AG04450 (cell line): ENCODE measurements at regions of chr16 and their contacts with region 1.

Region 1: DNA sequence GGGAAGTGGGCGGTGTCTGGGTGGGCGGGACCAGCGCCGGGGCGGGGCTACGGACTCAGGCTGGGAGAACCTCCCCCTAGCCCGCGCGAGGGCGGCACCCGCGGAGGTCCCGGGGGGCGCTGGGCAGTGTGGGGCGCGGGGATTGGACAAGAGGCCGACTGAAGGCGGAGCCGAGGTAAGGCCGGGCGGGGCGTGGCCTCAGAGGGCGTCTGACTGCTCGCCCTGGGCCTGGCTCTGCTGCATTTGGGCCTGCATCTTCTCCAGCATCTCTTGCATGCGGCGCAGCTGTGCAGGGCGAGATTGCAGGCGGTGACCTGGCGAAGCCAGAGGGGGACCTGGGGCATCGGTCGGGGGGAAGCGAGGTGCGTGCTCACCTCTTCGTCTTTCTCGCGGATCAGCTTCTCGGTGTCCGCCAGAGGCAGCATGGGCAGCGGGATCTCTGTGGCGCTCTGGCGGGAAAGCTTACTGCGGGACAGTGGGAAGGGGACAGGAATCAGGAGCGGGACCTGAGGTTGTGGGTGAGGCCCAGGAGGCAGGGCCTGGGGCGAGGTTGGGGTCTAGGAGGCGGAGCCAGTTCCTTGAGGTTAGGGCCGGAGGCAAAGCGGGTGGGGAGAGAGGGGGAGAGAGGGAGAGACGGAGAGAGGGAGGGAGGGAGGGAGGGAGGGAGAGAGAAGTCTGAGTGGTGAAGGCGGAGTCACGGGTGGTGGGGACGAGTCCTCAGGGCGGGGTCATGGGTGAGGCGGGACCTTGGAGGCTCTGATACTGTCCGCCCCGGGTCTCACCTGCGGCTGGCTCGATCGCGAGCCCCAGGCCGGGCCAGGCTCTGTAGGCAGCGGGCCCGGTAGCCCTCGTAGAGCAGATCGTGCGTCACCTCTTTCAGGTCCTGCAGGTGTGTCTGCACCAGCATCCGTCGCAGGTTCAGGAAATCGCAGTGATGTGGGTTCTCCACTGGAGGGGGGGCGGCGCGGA is 3.8 kb downstream of the SEPTIN1 start:
- DNase-seq: peak; percentile 86
- H3K4me3 ChIP-seq: peak overlapping the region; percentile 81
- H3K27ac ChIP-seq: peak overlapping the region; percentile 99
- H3K27me3 ChIP-seq: no peaks in the 10 kb centered on the region
- CTCF ChIP-seq: peak; percentile 31

Region 2: DNA sequence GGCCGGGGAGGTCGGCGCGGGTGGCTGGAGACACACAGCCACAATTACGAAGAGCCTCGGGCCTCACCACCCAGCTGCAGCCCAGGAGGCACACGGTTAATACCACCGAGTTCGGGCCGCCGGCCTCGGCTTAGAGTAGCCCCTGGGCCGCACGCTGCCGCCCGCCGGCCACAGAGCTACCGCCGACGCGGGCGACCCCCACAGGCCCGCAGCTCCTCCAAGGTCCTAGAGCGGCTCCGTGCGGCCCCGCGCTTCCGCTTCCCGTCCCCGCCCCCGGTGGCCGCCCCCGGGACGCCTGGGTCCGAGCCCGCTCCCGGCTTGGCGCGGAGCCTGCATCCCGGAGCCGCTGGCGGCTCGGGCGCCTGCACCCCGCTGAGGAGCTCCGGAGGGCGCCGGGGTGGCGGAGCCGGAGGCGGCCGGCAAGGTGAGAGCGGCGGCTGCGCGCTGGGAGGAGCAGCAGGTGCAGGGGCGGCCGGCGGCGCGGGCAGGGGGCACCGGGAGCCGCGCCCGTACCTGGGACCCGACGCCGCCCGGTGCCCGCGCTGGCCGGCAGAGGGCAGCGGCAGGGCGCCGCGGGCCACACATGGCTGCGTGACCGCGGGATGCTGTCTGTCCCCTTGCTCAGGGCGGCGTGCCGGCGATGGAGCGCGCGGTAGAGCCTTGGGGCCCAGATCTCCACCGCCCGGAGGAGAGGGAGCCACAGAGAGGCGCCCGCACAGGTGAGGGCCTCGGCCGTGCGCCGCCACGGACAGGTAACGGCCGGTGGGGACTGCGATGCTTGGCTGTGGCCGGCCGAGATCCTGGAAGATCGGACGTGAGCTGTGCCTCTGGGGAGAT is 16.9 kb after region 1 on chr16 and contains the start of gene ZNF48:
- CTCF ChIA-PET with region 1: no interaction called
- POLR2A ChIA-PET with region 1: interaction called, 10 read pairs
- DNase-seq: peak; percentile 63
- H3K4me3 ChIP-seq: peak within 1 kb of the TSS; percentile 79
- H3K27ac ChIP-seq: peak within 1 kb of the TSS; percentile 91
- H3K27me3 ChIP-seq: no peaks in the 10 kb centered on the region
- CTCF ChIP-seq: 0 out of 2 replicates have a peak, but pooled peaks have one; percentile 11
- polyA plus RNA-seq, gene ZNF48: 4.3 and 5.3 TPM in 2 replicates